Activated CD4-positive, alpha-beta T cell treated with anti-CD3 and anti-CD28 coated beads, Interleukin-2, amount 10 ng/mL, durations not matched to agents 7 days and 5 days (primary cell): ENCODE measurements at regions of chr15 and their contacts with region 1.

Region 1: GRCh38 chr15:61169904-61170695 is 59.0 kb downstream of the RORA start:
- DNase-seq: peak; percentile 52
- H3K4me3 Mint-ChIP-seq: peak overlapping the region; percentile 14
- H3K27ac Mint-ChIP-seq: peak overlapping the region; percentile 89
- H3K4me1 Mint-ChIP-seq: peaks cover 21% of the 10 kb centered on the region
- H3K27me3 Mint-ChIP-seq: peaks cover 16% of the 10 kb centered on the region

Region 2: DNA sequence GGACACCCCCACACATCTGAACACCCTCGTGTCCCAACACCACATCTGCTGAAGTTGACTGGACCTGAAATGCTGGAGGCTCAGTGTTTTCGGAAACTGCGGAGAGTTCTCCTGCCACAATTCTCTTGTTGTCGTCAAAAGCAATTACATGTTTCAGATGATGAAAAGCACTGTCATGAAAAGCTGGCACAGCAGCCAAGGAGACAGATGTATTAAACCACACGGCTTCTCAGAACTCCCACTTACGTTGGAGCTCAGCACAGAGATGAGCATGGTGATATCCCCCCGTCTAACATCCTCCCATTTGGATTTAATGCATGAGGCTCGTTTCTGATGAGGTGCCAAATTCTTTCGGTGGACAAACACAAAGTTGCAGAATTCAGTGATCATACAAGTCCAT is 121.1 kb before region 1 on chr15:
- CTCF ChIA-PET with region 1: no interaction called
- POLR2A ChIA-PET with region 1: no interaction called
- DNase-seq: no peak
- H3K4me3 Mint-ChIP-seq: no peak overlapping the region
- H3K27ac Mint-ChIP-seq: no peak overlapping the region
- H3K4me1 Mint-ChIP-seq: no peaks in the 10 kb centered on the region
- H3K27me3 Mint-ChIP-seq: peaks cover 3% of the 10 kb centered on the region

Region 3: DNA sequence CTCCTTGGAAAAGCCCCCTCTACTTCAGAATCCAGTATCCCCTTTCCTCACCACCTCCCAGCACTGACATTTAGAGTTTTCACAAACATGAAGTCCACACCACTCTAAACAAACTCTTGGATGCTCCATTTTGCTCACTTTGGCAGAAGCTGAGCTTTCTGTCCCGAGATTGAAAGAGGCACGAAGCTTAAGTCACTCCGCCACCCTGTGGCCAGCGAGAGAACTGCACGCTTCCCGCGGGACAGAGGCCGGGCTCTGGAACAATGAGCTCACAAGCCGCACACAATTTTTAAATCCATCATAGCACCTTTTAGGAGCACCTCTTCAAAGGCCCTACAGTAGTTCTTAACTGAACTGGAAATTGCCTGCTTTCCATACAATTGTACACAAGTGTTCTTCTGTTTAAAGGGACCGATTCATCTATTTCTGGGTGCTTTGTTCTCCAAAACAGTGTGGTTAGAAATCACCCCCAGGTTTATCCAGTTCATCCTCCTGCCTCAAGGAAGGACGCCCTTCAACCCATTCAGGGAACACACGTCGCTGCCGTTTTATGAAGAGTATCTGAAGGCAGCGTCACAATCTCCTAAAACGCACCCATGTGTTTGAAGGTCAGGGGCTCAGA is 664.1 kb after region 1 on chr15:
- CTCF ChIA-PET with region 1: interaction called, 20 read pairs
- POLR2A ChIA-PET with region 1: no interaction called
- DNase-seq: peak; percentile 74
- H3K4me3 Mint-ChIP-seq: no peak overlapping the region
- H3K27ac Mint-ChIP-seq: no peak overlapping the region
- H3K4me1 Mint-ChIP-seq: peaks cover 10% of the 10 kb centered on the region
- H3K27me3 Mint-ChIP-seq: peaks cover 6% of the 10 kb centered on the region